ENCODE measurements at regions of chr5 and their contacts with region 1.

Region 1: GRCh38 chr5:77645158-77645994 is 6.9 kb upstream of the OTP start:
- DNase-seq: no peak
- ATAC-seq: peak; percentile 55 to 62
- H3K4me3 ChIP-seq: peak overlapping the region in 3 of 4 donors; percentile 30 to 41 (median 31)
- H3K27ac ChIP-seq: no peak overlapping the region
- H3K4me1 ChIP-seq: peaks cover 9 to 15% of the 10 kb centered on the region in 2 donors
- H3K27me3 ChIP-seq: peaks cover 46 to 55% (median 48%) of the 10 kb centered on the region in 3 donors
- CTCF ChIP-seq: peak in 4 of 5 experiments; percentile 48 to 74 (median 68)
- POLR2A ChIP-seq: no peak

Region 2: GRCh38 chr5:77630258-77631089 is 14.9 kb before region 1 on chr5:
- in situ Hi-C with region 1: no loop called
- intact Hi-C with region 1: loop called (anchors 2 kb)
- DNase-seq: no peak
- ATAC-seq: peak; percentile 62
- H3K4me3 ChIP-seq: peak overlapping the region; percentile 39 to 65 (median 50)
- H3K27ac ChIP-seq: no peak overlapping the region
- H3K4me1 ChIP-seq: peaks cover 7 to 14% of the 10 kb centered on the region in 2 donors
- H3K27me3 ChIP-seq: peaks cover 97 to 99% (median 97%) of the 10 kb centered on the region in 3 donors
- CTCF ChIP-seq: peak in 1 of 5 experiments; percentile 10
- POLR2A ChIP-seq: no peak

Region 3: DNA sequence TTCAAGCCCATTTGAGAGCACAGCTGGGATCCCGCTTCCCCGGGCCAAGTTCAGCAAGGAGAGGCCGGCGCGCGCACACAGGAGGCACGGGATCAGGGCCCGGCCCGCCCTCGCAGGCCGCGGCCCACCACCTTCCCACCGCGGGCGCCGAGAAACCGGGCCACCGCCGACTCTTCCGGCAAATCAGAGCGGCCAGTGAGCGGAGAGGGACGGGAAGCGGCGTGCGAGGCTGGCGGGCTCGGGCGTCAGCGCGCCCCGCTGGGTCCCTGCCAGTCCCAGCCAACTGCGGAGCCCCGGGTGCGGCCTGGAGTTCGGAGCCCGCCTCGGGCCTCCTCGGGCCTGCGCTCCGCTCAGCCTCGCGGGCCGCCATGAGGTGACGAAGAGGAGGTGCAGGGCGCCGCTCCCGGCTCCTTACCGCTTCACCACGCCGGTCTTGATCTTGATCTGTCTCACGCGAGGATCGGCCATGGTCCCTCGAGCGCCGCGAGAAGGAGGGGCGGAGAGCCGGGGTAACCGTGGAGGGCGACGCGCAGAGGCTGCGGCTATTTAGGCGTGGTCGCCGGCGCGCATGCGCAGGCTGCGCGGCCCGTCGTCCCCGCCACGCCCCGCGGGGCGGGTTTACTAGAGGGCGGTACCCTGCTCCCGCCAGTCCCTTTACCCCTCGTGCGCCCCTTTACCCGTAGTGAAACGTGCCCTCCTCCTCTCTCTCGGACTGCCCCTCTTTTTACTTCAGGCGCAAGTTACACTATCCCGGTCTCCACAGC is 130.6 kb after region 1 on chr5 and contains the start of gene TBCA:
- in situ Hi-C with region 1: no loop called
- intact Hi-C with region 1: loop called (anchors 10 kb)
- DNase-seq: peak; percentile 63 to 81
- ATAC-seq: peak; percentile 90 to 91
- H3K4me3 ChIP-seq: peak within 1 kb of the TSS; percentile 68 to 96 (median 86)
- H3K27ac ChIP-seq: peak within 1 kb of the TSS; percentile 86 to 99 (median 98)
- H3K4me1 ChIP-seq: peaks cover 42 to 43% of the 10 kb centered on the region in 2 donors
- H3K27me3 ChIP-seq: no peaks in the 10 kb centered on the region
- CTCF ChIP-seq: peak; percentile 4 to 44 (median 18)
- POLR2A ChIP-seq: peak; percentile 93 to 95
- total RNA-seq, gene TBCA: 63.7 to 106 (median 88.1) TPM

Region 4: DNA sequence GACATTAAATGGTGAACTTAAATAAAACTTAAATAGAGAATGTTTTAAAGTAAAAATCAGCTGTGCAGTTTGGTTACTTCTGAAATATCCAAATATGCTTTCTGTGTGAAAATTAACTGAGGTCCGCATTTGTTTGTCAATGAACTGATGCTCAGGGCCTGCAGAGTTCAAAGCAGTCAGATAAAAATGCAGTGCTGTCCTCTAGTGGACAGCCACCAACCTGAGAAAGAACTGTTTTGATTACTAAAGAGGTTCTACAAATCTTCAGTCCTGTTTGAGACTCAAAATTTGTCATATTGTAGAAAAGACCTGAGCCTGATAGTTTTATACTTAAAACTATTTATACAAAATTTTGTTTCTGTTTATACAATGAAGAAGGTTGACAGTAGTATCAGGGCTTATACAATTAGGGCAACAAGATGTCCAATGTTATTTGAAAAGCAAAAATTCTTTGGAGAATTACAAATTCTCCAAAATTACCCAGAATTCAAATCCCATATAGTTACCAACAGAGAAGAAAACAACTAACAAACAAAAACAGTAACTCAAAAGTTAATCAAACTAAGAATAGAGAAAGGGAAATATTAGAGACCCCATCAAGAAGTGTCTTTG is 363.1 kb after region 1 on chr5:
- in situ Hi-C with region 1: no loop called
- intact Hi-C with region 1: loop called (anchors 10 kb)
- DNase-seq: no peak
- ATAC-seq: no peak
- H3K4me3 ChIP-seq: no peak overlapping the region
- H3K27ac ChIP-seq: no peak overlapping the region
- H3K4me1 ChIP-seq: no peaks in the 10 kb centered on the region
- H3K27me3 ChIP-seq: no peaks in the 10 kb centered on the region
- CTCF ChIP-seq: peak in 4 of 5 experiments; percentile 9 to 55 (median 37)
- POLR2A ChIP-seq: no peak

Measured in gastrocnemius medialis (tissue), 4 donors.